ENCODE measurements at regions of chr15 and their contacts with region 1.

Region 1: GRCh38 chr15:87752250-87752951 is 504.1 kb downstream of the NTRK3 start:
- DNase-seq: no peak

Region 2: DNA sequence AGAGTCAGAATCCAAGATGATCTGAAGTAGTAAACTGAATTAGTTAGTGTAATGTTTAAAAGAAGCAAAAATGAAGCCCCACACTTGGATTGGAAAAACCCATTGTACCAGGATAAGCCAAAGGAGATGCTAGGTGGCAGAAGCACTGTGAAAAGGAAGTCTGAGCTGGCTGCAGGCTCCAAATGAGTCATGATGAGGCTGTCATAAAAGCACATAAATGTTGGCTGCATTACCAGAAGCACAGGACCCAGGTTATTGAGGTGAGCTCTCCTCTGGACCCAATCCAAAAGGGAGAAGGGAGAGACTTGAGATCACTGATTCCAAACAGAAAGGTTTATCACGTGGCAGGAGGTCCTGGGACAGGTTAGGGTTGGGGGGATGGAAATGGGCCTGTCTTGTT is 1047.6 kb after region 1 on chr15:
- intact Hi-C with region 1: loop called in 1 of 2 experiments (anchors 10 kb)
- DNase-seq: no peak